IMR-90 (cell line): ENCODE measurements at regions of chr5 and their contacts with region 1.

Region 1: DNA sequence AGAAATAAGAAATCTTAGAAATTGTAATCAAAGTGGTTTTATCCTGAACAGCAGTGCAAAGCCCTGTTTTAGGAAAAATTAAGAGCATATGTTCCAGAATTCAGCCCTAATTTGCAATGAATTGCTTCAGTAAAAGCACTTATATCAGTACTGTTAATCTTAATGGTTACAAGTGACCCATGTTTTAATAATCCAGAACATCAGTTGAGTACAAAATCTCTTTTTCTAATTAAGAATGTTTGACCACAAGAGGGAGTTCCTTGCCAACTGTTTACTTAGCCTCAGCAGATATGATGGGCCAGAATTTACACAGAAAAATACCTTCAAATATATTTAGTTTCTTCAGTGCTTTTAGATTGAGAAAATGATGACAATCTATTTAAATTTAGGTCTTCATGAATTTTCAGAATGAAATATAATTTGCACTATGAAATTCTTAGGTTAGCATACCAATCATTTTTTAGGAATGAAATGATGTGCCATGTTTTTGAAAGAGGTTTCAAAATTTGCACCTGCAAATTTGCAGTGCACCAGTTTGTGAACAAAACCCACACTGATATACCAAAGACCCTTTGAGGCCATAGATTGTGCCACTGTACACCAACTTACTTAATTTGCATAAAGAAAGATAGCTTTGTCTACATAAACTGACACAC is 926.3 kb upstream of the ARRDC3 start:
- DNase-seq: peak; percentile 59
- ATAC-seq: peak; percentile 74
- H3K4me3 ChIP-seq: no peak overlapping the region
- H3K27ac ChIP-seq: no peak overlapping the region
- H3K4me1 ChIP-seq: no peaks in the 10 kb centered on the region
- H3K27me3 ChIP-seq: no peaks in the 10 kb centered on the region
- CTCF ChIP-seq: peak; percentile 66
- POLR2A ChIP-seq: no peak
- RAD21 ChIP-seq: peak; percentile 77

Region 2: DNA sequence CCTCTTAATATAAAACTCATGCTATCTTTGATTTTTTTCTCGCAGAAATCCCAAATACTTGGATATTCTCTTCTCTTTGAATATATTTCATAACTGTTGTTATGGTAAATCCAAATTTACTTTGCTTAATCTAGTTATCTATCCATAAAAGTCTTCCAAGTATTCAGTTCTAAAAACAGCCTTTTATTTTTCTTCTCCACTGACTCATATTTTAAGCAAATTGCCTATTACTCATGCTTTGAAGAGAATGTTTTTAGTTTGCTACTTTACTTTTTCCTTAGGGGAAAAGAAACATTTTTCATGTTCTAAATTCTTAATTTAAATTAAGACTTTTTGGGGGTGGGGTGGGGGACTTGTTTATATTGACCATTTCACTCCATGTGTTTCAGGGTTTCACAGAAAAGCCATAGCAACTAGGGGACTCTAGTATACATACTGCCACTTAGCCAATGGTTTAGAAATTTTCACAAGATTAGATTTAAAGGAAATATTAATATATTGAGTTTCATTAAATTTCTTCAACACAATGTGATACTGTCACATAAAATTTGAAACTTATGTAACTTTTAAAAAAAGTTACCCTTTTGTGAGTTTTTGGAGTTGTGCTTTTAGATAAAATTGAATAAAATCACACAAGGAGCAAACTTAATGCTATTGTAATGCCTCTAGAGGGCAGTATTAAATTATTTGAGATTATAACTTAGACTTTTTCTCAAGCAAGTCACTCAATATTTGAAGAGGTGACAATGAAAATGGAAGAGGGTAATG is 380.5 kb before region 1 on chr5:
- CTCF ChIA-PET with region 1: interaction called, 3 read pairs
- POLR2A ChIA-PET with region 1: no interaction called
- dilution Hi-C with region 1: no loop called
- in situ Hi-C with region 1: no loop called
- intact Hi-C with region 1: loop called (anchors 2 kb)
- DNase-seq: peak; percentile 31
- ATAC-seq: peak; percentile 77
- H3K4me3 ChIP-seq: no peak overlapping the region
- H3K27ac ChIP-seq: no peak overlapping the region
- H3K4me1 ChIP-seq: no peaks in the 10 kb centered on the region
- H3K27me3 ChIP-seq: no peaks in the 10 kb centered on the region
- CTCF ChIP-seq: peak; percentile 62
- POLR2A ChIP-seq: no peak
- RAD21 ChIP-seq: peak; percentile 48

Region 3: GRCh38 chr5:92222449-92222848 is 87.0 kb before region 1 on chr5:
- CTCF ChIA-PET with region 1: no interaction called
- POLR2A ChIA-PET with region 1: no interaction called
- dilution Hi-C with region 1: no loop called
- in situ Hi-C with region 1: no loop called
- intact Hi-C with region 1: no loop called
- DNase-seq: peak; percentile 1
- ATAC-seq: no peak; the same call in 1 of the 2 replicates
- H3K4me3 ChIP-seq: no peak overlapping the region
- H3K27ac ChIP-seq: no peak overlapping the region
- H3K4me1 ChIP-seq: no peaks in the 10 kb centered on the region
- H3K27me3 ChIP-seq: no peaks in the 10 kb centered on the region
- CTCF ChIP-seq: no peak
- POLR2A ChIP-seq: no peak
- RAD21 ChIP-seq: no peak

Region 4: DNA sequence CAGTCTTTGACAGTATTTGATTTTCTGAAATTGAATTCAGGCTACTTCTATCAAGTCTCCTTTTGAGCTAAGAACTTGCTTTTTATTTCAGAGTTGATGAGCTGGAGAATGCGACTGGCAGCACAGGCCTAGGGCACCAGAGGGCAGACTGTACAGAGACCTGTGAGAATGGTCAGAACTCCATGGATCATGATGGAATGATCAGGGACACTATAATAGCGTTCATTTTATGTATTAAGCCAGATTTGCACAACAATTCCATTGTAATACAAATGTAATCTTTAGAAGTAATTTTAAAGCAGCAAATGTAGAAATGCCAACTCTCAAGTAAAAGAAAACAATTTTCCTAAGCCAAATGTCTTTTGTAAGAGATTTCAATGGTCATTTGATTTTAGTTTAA is 369.2 kb after region 1 on chr5:
- CTCF ChIA-PET with region 1: no interaction called
- POLR2A ChIA-PET with region 1: interaction called, 3 read pairs
- dilution Hi-C with region 1: no loop called
- in situ Hi-C with region 1: no loop called
- intact Hi-C with region 1: loop called (anchors 5 kb)
- DNase-seq: no peak
- ATAC-seq: no peak
- H3K4me3 ChIP-seq: no peak overlapping the region
- H3K27ac ChIP-seq: no peak overlapping the region
- H3K4me1 ChIP-seq: no peaks in the 10 kb centered on the region
- H3K27me3 ChIP-seq: no peaks in the 10 kb centered on the region
- CTCF ChIP-seq: no peak
- POLR2A ChIP-seq: no peak
- RAD21 ChIP-seq: no peak

Region 5: DNA sequence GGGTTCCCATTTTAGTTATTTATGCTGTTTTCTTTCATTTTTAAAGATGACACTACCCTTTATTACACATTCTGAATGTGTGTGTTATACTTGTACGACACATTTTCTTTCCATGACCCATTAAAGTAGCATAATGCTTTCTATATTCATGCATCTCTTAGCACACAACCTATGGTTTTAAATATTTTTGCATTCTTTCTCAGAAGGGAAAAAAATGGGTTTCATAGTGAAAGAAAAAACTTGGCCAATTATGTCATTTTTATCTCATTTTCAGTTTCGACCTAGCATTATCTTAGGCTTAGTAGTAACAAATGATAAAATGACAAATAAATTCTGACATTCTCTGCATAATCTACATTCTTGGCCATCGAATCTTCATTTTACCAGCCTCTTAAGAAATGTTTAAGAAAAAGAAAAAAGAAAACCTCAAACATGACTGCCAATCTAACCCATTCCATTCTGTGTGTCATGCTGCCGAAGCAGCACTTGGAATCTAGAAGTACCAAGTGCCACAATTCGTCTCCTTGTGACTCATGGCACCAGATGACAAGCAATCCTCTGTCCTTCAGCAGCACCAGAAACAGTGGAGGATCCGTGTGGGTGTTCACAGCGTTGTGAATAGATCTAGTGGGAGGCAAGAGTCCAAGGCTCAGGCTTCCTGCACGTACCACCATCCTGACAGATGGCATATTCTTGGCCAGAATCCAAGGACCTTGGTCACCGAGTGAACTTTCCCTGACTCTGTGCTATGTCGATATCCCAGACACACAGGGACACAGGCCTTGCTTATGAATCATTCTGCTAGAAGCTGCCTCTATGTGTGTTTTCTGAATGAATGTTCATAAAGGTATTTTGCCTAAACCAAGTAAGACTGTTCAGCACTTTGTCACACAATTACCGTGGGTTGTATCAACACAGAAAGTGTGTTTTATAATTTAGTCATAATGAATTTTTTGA is 768.9 kb after region 1 on chr5:
- CTCF ChIA-PET with region 1: no interaction called
- POLR2A ChIA-PET with region 1: no interaction called
- dilution Hi-C with region 1: no loop called
- in situ Hi-C with region 1: loop called (anchors 25 kb)
- intact Hi-C with region 1: loop called (anchors 10 kb)
- DNase-seq: peak; percentile 93
- ATAC-seq: peak; percentile 82
- H3K4me3 ChIP-seq: peak overlapping the region; percentile 29
- H3K27ac ChIP-seq: peak overlapping the region; percentile 97
- H3K4me1 ChIP-seq: peaks cover 4% of the 10 kb centered on the region
- H3K27me3 ChIP-seq: no peaks in the 10 kb centered on the region
- CTCF ChIP-seq: no peak
- POLR2A ChIP-seq: no peak
- RAD21 ChIP-seq: no peak; the same call in 1 of the 2 replicates

Region 6: DNA sequence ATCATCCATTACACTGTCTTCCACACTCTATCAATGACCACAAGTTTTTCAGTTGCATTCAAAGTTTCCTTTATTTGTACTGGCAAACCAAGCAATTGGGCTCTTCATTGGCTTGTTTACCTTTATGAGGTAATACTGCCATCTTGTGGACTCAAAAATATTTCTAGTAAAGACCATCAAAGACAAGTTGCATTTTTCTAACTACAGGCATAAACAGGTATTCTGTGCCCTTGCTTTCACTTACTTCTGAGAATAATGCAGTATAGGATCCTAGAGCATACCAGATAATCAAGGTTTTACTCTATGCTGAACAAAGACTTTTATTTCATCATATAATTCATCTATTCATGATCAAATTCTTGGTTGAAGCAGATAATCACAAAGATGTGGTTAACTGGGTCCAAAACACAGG is 1605.7 kb after region 1 on chr5:
- CTCF ChIA-PET with region 1: no interaction called
- POLR2A ChIA-PET with region 1: no interaction called
- dilution Hi-C with region 1: no loop called
- in situ Hi-C with region 1: loop called (anchors 25 kb)
- intact Hi-C with region 1: no loop called
- DNase-seq: peak; percentile 73
- ATAC-seq: peak; percentile 56; the same call in 1 of the 2 replicates
- H3K4me3 ChIP-seq: no peak overlapping the region
- H3K27ac ChIP-seq: no peak overlapping the region
- H3K4me1 ChIP-seq: no peaks in the 10 kb centered on the region
- H3K27me3 ChIP-seq: no peaks in the 10 kb centered on the region
- CTCF ChIP-seq: peak; percentile 69
- POLR2A ChIP-seq: no peak
- RAD21 ChIP-seq: peak; percentile 75